ENCODE measurements at regions of chr4 and their contacts with region 1.

Region 1: DNA sequence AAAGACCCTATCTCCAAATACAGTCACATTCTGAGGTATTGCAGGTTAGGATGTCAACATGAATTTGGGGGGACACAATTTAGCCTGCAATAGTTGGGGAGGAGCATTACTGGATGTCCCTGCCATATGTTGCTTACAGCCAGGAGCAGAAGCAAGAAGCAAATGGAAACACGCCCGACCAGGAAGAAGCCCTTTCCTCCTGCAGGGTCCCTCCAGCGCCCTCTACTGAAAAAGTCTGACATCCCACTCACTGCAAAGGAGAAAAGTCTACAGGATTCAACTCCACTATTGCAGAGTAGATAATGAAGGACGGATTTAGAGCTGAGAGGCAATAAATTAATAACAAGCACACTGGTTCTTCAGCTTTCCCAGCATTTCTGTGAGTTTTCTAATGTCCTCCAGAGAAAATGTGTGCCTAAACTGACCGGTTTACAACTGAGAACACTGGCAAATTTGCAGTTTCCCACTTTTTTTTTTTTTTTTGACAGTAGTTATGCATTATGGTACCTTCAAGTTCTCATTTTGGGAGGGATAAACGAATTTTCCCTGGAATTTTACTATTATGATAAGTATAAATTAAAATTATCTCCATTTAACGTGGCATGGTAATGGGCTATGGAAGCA is 31.7 kb downstream of the COQ2 start:
- DNase-seq: peak; percentile 87
- ATAC-seq: peak; percentile 82
- H3K4me3 Mint-ChIP-seq: no peak overlapping the region
- H3K27ac Mint-ChIP-seq: peak overlapping the region; percentile 64
- H3K4me1 Mint-ChIP-seq: peaks cover 37% of the 10 kb centered on the region
- H3K27me3 Mint-ChIP-seq: no peaks in the 10 kb centered on the region

Region 2: GRCh38 chr4:83025563-83025962 is 227.3 kb before region 1 on chr4:
- CTCF ChIA-PET with region 1: no interaction called
- POLR2A ChIA-PET with region 1: no interaction called
- DNase-seq: no peak
- ATAC-seq: no peak
- H3K4me3 Mint-ChIP-seq: no peak overlapping the region
- H3K27ac Mint-ChIP-seq: no peak overlapping the region
- H3K4me1 Mint-ChIP-seq: no peaks in the 10 kb centered on the region
- H3K27me3 Mint-ChIP-seq: peaks cover 14% of the 10 kb centered on the region

Region 3: DNA sequence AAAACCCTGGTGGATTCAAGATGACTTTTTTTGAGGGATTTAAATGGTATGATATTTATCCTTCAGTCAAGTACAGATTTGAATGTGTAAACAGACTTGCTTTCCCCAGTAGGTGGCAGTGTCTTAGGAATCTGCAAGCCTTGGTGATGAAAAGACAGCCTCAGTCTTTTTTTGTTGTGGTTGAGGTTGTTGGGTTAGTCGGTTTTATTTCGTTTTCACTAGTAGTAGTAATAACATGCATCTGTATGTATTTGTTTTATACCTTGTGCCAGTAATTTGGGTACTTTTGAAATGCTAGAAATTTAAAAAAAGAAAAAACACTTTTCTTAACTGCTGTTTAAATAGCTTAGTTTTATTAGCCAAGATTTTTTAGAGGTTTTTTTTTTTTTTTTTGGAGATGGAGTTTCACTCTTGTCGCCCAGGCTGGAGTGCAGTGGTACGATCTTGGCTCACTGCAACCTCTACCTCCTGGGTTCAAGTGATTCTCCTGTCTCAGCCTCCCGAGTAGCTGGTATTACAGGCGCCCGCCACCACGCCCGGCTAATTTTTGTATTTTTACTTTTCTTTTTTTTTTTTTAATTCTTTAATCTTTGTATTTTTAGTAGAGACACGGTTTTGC is 178.7 kb before region 1 on chr4:
- CTCF ChIA-PET with region 1: interaction called, 54 read pairs
- POLR2A ChIA-PET with region 1: no interaction called
- DNase-seq: peak; percentile 84
- ATAC-seq: peak; percentile 91
- H3K4me3 Mint-ChIP-seq: peak overlapping the region; percentile 59
- H3K27ac Mint-ChIP-seq: peak overlapping the region; percentile 48
- H3K4me1 Mint-ChIP-seq: peaks cover 17% of the 10 kb centered on the region
- H3K27me3 Mint-ChIP-seq: no peaks in the 10 kb centered on the region

Region 4: DNA sequence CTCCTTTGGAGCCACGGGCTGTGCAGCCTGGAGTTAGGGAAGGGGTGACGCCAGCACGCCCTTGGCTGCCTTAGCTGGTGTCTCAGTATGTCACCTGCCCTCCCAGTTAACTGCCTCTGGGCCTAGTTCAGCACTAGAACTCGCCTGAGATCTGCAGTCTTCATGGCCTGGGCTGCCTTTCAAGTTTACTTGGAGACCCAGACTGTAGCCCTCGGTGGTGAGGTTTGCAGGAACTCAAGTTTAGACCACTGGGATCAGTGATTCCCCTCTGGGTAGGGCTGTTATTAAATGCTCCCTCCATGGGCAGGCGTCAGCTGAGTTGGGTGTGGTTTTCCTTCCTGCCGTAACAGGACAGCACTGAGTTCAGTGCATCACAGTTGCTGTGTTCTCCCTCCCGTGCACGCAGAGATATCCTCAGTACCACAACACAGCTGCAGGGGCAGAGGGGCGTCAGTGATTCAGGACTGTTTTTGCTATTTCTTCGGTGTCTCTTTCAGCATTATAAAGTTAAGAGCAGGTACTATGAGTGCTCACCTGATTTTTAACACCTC is 168.9 kb before region 1 on chr4:
- CTCF ChIA-PET with region 1: interaction called, 13 read pairs
- POLR2A ChIA-PET with region 1: no interaction called
- DNase-seq: peak; percentile 87
- ATAC-seq: peak; percentile 98
- H3K4me3 Mint-ChIP-seq: peak overlapping the region; percentile 38
- H3K27ac Mint-ChIP-seq: peak overlapping the region; percentile 90
- H3K4me1 Mint-ChIP-seq: peaks cover 36% of the 10 kb centered on the region
- H3K27me3 Mint-ChIP-seq: no peaks in the 10 kb centered on the region

Region 5: DNA sequence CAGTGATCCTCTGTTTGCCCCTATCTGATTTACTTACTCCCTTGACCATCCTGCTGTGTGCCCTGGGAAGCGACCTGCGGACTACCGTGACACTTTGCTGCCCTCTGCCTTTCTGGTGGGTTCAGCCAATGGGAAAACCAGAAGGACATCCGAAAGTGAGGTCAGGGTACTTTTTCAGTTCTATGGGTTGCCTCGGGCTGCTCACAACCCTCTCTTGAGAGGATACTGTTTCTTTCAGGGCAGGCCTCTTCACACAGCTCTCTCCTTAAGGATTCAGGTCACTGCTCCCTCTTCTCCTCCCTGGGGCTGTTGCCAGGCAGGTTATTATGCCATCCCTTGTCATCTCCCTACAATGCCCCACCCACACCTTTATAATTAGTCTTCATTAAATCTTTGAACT is 159.8 kb before region 1 on chr4:
- CTCF ChIA-PET with region 1: interaction called, 17 read pairs
- POLR2A ChIA-PET with region 1: no interaction called
- DNase-seq: no peak
- ATAC-seq: no peak
- H3K4me3 Mint-ChIP-seq: no peak overlapping the region
- H3K27ac Mint-ChIP-seq: no peak overlapping the region
- H3K4me1 Mint-ChIP-seq: peaks cover 4% of the 10 kb centered on the region
- H3K27me3 Mint-ChIP-seq: no peaks in the 10 kb centered on the region

Region 6: DNA sequence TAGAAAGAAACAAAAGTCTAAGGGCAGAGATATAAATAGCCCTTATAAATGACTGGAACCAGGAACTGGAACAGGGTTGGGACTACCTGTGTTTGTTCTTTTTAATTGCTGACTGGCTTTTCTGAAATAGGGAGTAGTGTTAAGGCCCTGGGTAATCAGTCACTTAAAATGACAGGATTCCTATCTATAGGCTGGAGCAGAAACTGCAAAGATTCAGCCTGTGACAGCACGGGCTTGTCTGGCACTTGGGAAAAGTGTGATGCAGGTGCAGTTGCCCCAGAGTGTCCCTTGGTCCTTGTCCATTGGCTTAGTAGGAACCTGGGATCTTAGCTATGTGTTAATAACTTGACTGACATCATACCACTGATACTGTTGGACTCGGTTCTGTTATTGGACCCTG is 123.6 kb before region 1 on chr4:
- CTCF ChIA-PET with region 1: no interaction called
- POLR2A ChIA-PET with region 1: no interaction called
- DNase-seq: no peak
- ATAC-seq: no peak
- H3K4me3 Mint-ChIP-seq: no peak overlapping the region
- H3K27ac Mint-ChIP-seq: no peak overlapping the region
- H3K4me1 Mint-ChIP-seq: peaks cover 29% of the 10 kb centered on the region
- H3K27me3 Mint-ChIP-seq: no peaks in the 10 kb centered on the region

Region 7: DNA sequence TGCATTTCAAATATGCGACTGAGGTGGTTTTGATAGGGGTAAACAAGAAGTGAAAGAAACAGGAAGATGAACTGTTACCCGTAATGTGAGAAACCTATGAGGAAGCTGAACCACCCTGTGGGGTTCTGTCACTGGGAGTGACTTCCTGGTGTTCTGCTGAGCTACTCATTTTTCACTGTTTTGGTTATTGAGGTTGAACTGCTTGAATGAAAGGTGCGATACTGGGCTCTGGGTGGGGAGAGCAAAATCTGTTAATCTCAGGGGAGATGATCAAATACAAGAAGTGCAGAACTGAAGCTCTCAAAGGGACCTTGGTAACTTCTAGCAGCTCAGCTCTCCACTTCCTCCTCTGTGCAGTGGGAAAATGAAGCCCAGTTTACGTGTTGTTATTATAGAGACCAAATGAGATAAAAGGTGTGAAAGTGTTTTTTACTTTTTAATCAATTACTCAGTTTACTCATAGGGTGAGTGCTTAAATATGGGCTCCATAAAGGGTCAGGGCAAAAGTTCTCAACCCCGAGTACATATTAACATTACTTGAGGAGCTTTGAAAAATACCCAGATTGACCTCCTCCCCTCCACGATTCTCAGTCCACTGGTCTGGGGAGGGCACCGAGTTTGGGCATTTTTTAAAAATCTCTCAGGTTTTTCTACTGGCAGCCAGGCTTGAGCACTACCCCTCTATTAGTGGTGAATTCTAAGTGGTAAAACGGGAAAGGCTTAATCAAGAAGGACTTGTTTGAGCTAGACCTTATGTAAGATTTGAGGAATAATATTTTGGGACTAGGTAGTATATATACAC is 35.0 kb before region 1 on chr4:
- CTCF ChIA-PET with region 1: interaction called, 31 read pairs
- POLR2A ChIA-PET with region 1: interaction called, 6 read pairs
- DNase-seq: peak; percentile 86
- ATAC-seq: peak; percentile 91
- H3K4me3 Mint-ChIP-seq: peak overlapping the region; percentile 80
- H3K27ac Mint-ChIP-seq: peak overlapping the region; percentile 87
- H3K4me1 Mint-ChIP-seq: peaks cover 76% of the 10 kb centered on the region
- H3K27me3 Mint-ChIP-seq: no peaks in the 10 kb centered on the region

Region 8: GRCh38 chr4:83237591-83237990 is 15.3 kb before region 1 on chr4:
- CTCF ChIA-PET with region 1: interaction called, 36 read pairs
- POLR2A ChIA-PET with region 1: no interaction called
- DNase-seq: no peak
- ATAC-seq: no peak
- H3K4me3 Mint-ChIP-seq: no peak overlapping the region
- H3K27ac Mint-ChIP-seq: peak overlapping the region; percentile 7
- H3K4me1 Mint-ChIP-seq: peaks cover 62% of the 10 kb centered on the region
- H3K27me3 Mint-ChIP-seq: no peaks in the 10 kb centered on the region

Region 9: DNA sequence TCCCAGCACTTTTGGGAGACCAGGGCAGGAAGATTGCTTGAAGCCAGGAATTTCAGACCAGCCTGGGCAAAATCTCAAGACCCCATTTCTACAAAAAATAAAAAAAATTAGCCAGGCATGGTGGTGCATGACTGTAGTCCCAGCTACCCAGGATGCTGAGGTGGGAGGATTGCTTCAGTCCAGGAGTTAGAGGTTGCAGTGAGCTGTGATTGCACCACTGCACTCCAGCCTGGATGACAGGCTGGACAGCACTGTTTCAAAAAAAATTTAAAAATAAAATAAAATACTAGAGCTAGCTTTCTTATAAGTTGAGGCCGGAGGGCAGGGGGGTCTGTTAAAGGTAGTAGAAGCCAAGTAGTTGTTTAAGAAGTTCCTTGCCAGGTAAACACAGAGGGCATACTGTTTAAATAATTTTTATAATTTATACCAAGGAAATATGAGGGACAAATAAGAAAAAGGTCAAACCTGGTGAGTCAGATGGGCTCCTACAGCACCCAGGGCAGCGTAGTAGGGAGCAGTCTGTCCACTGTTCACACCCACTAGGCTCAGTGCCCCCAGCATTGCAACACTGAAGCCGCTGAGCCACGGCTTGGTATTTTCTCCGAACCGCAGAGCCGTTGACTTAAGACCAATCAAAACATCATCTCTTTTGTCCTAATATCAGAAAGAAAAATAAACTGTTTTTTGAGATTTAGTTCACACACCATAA is 14.4 kb after region 1 on chr4:
- CTCF ChIA-PET with region 1: interaction called, 30 read pairs
- POLR2A ChIA-PET with region 1: no interaction called
- DNase-seq: no peak
- ATAC-seq: no peak
- H3K4me3 Mint-ChIP-seq: no peak overlapping the region
- H3K27ac Mint-ChIP-seq: no peak overlapping the region
- H3K4me1 Mint-ChIP-seq: peaks cover 19% of the 10 kb centered on the region
- H3K27me3 Mint-ChIP-seq: no peaks in the 10 kb centered on the region

Measured in activated CD8-positive, alpha-beta T cell treated with anti-CD3 and anti-CD28 coated beads, Interleukin-2, amount 10 ng/mL, durations not matched to agents 7 days and 5 days (primary cell).